Naive thymus-derived CD8-positive, alpha-beta T cell (primary cell): ENCODE measurements at regions of chr12 and their contacts with region 1.

Region 1: GRCh38 chr12:75480469-75480949 is at the start of gene GLIPR1:
- DNase-seq: peak; percentile 22 to 82 (median 72)
- ATAC-seq: peak; percentile 71 to 74
- H3K4me3 Mint-ChIP-seq: peak within 1 kb of the TSS; percentile 74 to 100 (median 98)
- H3K27ac Mint-ChIP-seq: peak within 1 kb of the TSS; percentile 94 to 99 (median 99)
- H3K4me1 Mint-ChIP-seq: peaks cover 42 to 87% (median 74%) of the 10 kb centered on the region in 4 donors
- H3K27me3 Mint-ChIP-seq: peaks cover 0 to 1% (median 0%) of the 10 kb centered on the region in 5 donors
- polyA plus RNA-seq, gene GLIPR1: 51.2 to 117 (median 58.6) TPM

Region 2: GRCh38 chr12:75390899-75391538 is 89.5 kb before region 1 on chr12 and contains the start of gene GLIPR1L2:
- POLR2A ChIA-PET with region 1: interaction called, 27 read pairs
- DNase-seq: peak; percentile 67 to 92 (median 83)
- ATAC-seq: peak; percentile 89 to 92
- H3K4me3 Mint-ChIP-seq: peak within 1 kb of the TSS; percentile 90 to 97 (median 94)
- H3K27ac Mint-ChIP-seq: peak within 1 kb of the TSS; percentile 97 to 100 (median 98)
- H3K4me1 Mint-ChIP-seq: peaks cover 14 to 57% (median 38%) of the 10 kb centered on the region in 4 donors
- H3K27me3 Mint-ChIP-seq: no peaks in the 10 kb centered on the region
- polyA plus RNA-seq, gene GLIPR1L2: 1.1 to 3.2 (median 1.4) TPM